Naive thymus-derived CD4-positive, alpha-beta T cell (primary cell): ENCODE measurements at regions of chr16 and their contacts with region 1.

Region 1: DNA sequence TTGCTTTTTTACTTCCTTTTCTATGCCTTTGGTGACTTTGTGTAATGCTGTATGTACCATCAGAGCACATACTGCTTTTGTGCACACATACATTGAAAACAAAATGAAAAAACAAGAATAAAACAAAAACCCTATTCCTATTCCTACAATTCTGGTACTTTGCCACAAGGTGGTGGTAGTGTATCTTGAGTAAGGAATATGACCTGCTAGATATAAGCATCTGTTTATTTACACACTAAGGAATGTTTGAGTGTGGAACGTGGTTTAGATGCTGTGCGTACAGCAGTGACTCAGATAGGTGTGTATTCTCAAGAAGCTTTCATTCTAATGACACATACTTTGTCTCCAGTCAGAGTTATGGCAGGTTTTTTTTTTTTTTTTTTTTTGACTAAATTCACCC is 606.2 kb downstream of the WWOX start:
- DNase-seq: peak in 5 of 9 donors; percentile 7 to 26 (median 12)
- ATAC-seq: peak; percentile 45
- H3K4me3 ChIP-seq: no peak overlapping the region
- H3K4me3 Mint-ChIP-seq: no peak overlapping the region
- H3K27ac ChIP-seq: no peak overlapping the region
- H3K27ac Mint-ChIP-seq: no peak overlapping the region
- H3K4me1 ChIP-seq: no peaks in the 10 kb centered on the region
- H3K4me1 Mint-ChIP-seq: peaks cover 0 to 8% (median 0%) of the 10 kb centered on the region in 7 donors
- H3K27me3 ChIP-seq: no peaks in the 10 kb centered on the region
- H3K27me3 Mint-ChIP-seq: no peaks in the 10 kb centered on the region

Region 2: DNA sequence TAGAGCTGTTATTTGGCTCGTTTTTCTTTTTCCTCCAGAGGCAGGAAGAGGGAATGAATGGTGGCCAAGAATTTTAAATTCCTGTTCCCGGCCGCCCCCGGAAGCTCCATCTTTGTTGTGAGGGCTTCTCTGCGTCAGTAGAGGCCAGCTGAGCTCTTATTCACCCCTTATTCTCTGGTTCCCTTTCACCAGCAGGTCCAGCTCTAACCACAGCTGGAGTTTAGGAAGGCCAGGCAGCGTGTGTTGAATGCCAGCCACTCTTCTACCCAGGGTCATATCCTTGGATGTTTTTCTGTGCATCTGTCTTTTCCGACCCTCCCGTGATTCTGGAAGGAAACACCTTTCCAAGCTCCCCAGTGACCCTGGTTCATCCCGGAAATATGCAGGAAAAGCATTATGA is 35.7 kb before region 1 on chr16:
- CTCF ChIA-PET with region 1: no interaction called
- POLR2A ChIA-PET with region 1: no interaction called
- intact Hi-C with region 1: no loop called
- DNase-seq: no peak
- ATAC-seq: no peak
- H3K4me3 ChIP-seq: no peak overlapping the region
- H3K4me3 Mint-ChIP-seq: no peak overlapping the region
- H3K27ac ChIP-seq: no peak overlapping the region
- H3K27ac Mint-ChIP-seq: no peak overlapping the region
- H3K4me1 ChIP-seq: no peaks in the 10 kb centered on the region
- H3K4me1 Mint-ChIP-seq: no peaks in the 10 kb centered on the region
- H3K27me3 ChIP-seq: no peaks in the 10 kb centered on the region
- H3K27me3 Mint-ChIP-seq: no peaks in the 10 kb centered on the region

Region 3: DNA sequence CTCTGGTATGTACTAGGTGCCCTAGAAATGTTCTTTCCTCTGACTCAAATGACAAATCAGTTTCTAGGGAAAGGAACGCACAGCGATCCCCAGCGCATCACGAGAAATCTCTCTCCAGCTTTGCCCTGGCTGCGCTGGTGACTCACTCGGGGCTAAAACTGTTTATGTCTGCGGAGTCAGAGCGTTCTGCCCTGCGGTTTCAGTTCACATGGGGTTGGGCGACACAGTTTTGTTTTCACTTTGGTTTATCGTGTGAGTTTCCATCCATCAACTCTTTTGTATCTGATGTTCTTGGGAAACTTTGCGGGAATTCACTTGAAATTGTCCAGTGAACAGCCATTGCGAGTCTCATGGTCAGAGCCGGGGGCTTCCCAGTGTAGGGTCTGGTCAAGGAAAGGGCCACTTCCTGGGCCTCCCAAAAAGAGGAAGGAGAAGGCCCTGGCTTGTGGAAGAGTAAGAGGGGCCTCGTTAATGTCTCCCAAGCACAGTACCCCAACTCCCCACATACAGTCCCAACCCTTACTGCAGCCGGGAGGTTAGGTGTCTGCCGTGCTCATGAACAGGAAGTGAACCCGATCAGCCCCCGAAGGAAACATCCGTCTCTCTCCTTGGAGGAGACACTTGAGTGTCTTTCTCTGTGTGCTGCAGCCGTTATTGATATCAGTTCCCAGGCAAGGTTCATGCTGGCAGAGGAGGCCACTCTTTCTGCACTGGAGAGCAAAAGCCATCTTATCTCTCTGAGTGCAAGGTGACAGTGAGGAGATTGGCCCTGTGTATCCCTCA is 37.0 kb after region 1 on chr16:
- CTCF ChIA-PET with region 1: no interaction called
- POLR2A ChIA-PET with region 1: no interaction called
- intact Hi-C with region 1: loop called in 1 of 2 experiments (anchors 1 kb)
- DNase-seq: peak; percentile 27 to 72 (median 46)
- ATAC-seq: peak; percentile 93
- H3K4me3 ChIP-seq: peak overlapping the region; percentile 62
- H3K4me3 Mint-ChIP-seq: peak overlapping the region; percentile 61 to 84 (median 77)
- H3K27ac ChIP-seq: peak overlapping the region; percentile 73
- H3K27ac Mint-ChIP-seq: peak overlapping the region; percentile 86 to 98 (median 93)
- H3K4me1 ChIP-seq: peaks cover 12 to 22% of the 10 kb centered on the region in 2 donors
- H3K4me1 Mint-ChIP-seq: peaks cover 5 to 23% (median 20%) of the 10 kb centered on the region in 7 donors
- H3K27me3 ChIP-seq: no peaks in the 10 kb centered on the region
- H3K27me3 Mint-ChIP-seq: no peaks in the 10 kb centered on the region

Region 4: DNA sequence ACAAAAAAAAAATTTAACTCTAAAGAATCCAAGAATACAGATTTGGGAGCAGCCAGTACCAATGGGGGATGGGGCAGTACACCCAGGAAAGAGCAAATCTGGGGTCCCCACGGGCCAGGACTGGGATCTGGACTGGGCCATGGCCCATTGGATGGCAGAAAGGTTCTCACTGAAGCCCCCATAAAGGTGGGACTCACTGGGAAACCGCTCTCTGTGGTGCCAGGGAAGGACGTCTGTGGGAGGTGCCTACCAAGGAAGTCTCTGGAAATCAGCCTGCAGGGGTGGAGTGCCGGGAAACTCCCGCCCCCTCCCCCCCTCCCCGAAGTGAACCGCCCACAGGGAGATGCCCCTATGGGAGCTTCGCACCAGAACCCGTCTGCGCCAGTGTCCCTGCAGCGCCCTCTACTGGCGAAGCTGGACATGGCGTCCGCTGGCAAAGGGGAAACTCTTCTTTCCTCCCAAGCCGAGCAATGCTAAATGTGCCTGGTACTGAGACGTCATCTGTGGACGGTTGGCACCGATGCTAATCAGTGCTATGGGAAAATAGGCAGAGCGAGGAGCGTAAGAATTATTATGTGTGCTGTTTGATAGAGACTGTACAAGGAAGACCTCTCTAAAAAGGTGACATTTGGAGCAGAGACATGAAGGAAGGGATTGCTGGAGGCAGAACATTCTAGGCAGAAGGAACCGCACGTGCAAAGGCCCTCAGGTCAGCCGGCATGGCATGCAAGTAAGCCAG is 64.8 kb after region 1 on chr16:
- CTCF ChIA-PET with region 1: interaction called, 10 read pairs
- POLR2A ChIA-PET with region 1: no interaction called
- intact Hi-C with region 1: loop called (anchors 1 kb)
- DNase-seq: peak; percentile 21 to 81 (median 52)
- ATAC-seq: peak; percentile 94
- H3K4me3 ChIP-seq: no peak overlapping the region
- H3K4me3 Mint-ChIP-seq: peak overlapping the region in 2 of 10 donors; percentile 4 to 28
- H3K27ac ChIP-seq: no peak overlapping the region
- H3K27ac Mint-ChIP-seq: peak overlapping the region in 5 of 9 donors; percentile 1 to 26 (median 3)
- H3K4me1 ChIP-seq: peaks cover 0 to 21% of the 10 kb centered on the region in 2 donors
- H3K4me1 Mint-ChIP-seq: peaks cover 6 to 23% (median 7%) of the 10 kb centered on the region in 7 donors
- H3K27me3 ChIP-seq: no peaks in the 10 kb centered on the region
- H3K27me3 Mint-ChIP-seq: peaks cover 0 to 5% (median 0%) of the 10 kb centered on the region in 5 donors

Region 5: DNA sequence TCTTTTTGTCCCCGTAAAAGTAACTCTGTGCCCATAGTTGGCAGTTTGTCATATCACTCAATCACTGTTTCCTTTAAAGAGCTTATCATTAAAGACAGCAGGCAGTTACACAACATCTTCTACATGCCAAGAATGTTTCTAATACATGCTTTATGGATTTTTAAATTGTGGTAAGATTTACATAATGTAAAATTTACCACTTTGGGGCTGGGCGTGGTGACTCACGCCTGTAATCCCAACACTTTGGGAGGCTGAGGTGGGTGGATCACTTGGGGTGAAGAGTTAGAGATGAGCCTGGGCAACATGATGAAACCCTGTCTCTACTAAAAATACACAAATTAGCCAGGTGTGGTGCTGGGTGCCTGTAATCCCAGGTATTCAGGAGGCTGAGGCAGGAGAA is 81.0 kb after region 1 on chr16:
- CTCF ChIA-PET with region 1: no interaction called
- POLR2A ChIA-PET with region 1: no interaction called
- intact Hi-C with region 1: no loop called
- DNase-seq: no peak
- ATAC-seq: no peak
- H3K4me3 ChIP-seq: no peak overlapping the region
- H3K4me3 Mint-ChIP-seq: no peak overlapping the region
- H3K27ac ChIP-seq: no peak overlapping the region
- H3K27ac Mint-ChIP-seq: no peak overlapping the region
- H3K4me1 ChIP-seq: no peaks in the 10 kb centered on the region
- H3K4me1 Mint-ChIP-seq: peaks cover 0 to 19% (median 0%) of the 10 kb centered on the region in 7 donors
- H3K27me3 ChIP-seq: no peaks in the 10 kb centered on the region
- H3K27me3 Mint-ChIP-seq: no peaks in the 10 kb centered on the region

Region 6: DNA sequence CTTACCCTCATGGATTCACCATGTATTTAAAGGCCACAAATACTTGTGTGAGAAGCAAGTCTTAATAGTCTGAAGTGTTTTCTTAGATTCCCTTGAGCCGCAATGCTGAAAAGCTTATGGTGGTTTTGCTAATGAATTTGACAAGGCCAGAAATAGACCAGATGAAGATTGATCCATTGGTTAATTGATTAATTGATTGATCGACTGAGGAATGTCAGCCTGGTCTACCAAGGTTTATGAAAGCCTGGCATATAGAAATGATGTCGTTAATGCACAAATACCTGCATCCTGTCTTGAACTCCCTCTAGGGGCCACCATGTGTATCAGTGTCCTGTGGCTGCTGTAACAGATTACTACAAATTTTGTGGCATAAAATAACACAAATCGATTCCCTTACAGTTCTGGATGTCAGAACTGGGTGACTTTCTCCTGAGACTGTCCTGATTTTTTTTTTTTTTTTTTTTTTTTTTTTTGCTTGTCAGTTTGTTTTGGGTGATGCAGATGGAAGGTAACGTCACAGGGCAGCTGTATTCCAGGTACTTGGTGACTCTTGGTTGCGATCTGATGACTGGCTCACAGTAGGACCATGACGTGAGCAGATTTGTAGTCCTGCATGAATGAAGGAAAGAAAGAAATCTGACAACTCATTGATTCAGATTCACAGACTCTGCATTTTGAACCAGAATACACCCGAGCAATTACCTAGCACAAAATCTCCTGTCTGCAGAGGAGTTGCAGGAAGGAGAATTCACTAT is 341.7 kb after region 1 on chr16:
- CTCF ChIA-PET with region 1: no interaction called
- POLR2A ChIA-PET with region 1: no interaction called
- intact Hi-C with region 1: loop called (anchors 2 to 5 kb)
- DNase-seq: no peak
- ATAC-seq: peak; percentile 49
- H3K4me3 ChIP-seq: no peak overlapping the region
- H3K4me3 Mint-ChIP-seq: no peak overlapping the region
- H3K27ac ChIP-seq: no peak overlapping the region
- H3K27ac Mint-ChIP-seq: no peak overlapping the region
- H3K4me1 ChIP-seq: peaks cover 12 to 16% of the 10 kb centered on the region in 2 donors
- H3K4me1 Mint-ChIP-seq: peaks cover 18 to 30% (median 26%) of the 10 kb centered on the region in 7 donors
- H3K27me3 ChIP-seq: no peaks in the 10 kb centered on the region
- H3K27me3 Mint-ChIP-seq: no peaks in the 10 kb centered on the region

Region 7: GRCh38 chr16:79261481-79261940 is 555.8 kb after region 1 on chr16:
- CTCF ChIA-PET with region 1: no interaction called
- POLR2A ChIA-PET with region 1: no interaction called
- intact Hi-C with region 1: loop called in 1 of 2 experiments (anchors 10 kb)
- DNase-seq: peak in 3 of 9 donors; percentile 13 to 34 (median 14)
- ATAC-seq: peak; percentile 65
- H3K4me3 ChIP-seq: no peak overlapping the region
- H3K4me3 Mint-ChIP-seq: no peak overlapping the region
- H3K27ac ChIP-seq: no peak overlapping the region
- H3K27ac Mint-ChIP-seq: peak overlapping the region in 1 of 9 donors; percentile 31
- H3K4me1 ChIP-seq: no peaks in the 10 kb centered on the region
- H3K4me1 Mint-ChIP-seq: peaks cover 0 to 28% (median 0%) of the 10 kb centered on the region in 7 donors
- H3K27me3 ChIP-seq: peaks cover 0 to 3% of the 10 kb centered on the region in 2 donors
- H3K27me3 Mint-ChIP-seq: peaks cover 5 to 37% (median 26%) of the 10 kb centered on the region in 5 donors

Region 8: DNA sequence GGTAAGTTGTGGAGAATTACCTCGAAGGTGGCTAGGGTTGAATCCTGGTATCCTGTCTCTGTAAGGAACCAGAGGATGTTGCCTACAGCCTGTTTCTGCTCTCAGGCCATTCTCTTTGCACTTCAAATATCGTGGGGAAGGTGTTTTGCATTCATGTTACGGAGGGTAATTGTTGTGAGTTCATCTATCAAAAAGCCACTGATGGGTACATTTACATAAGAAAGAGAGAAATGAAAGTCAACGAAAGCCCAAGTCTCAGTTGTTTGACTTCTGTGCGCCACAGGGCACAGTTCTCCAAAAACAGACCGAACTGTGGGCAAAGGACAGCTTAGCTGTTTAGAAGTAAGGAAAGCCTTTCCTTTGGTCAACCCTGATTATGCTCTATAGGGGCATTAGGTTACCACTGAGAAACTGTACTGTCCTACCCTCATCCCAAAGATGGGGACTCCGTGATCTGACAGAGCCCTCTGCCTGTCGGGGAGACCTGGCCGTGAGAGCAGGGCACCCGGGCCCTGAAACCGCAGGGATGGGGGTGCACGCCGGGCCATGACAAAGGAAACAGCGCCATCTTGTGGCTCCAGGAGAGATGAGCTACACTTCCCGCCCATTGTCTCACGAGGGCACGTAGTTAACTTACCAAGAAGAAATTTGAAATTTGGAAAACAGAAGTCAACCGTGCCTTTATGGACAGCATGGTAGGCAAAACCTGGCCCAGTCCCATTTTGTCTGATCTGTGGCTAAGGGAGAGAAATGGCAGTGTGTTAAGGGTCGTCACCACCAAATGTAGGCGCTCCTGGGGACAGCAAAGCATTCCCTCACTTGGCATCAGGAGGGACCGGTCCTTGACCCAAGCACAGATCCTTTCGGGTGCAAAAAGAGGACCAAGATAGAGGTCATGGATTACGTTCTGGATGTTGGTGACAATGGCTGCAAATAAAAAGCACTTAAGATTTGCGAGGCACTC is 1760.6 kb after region 1 on chr16:
- CTCF ChIA-PET with region 1: no interaction called
- POLR2A ChIA-PET with region 1: no interaction called
- intact Hi-C with region 1: loop called in 1 of 2 experiments (anchors 10 kb)
- DNase-seq: peak in 7 of 9 donors; percentile 25 to 59 (median 34)
- ATAC-seq: peak; percentile 77
- H3K4me3 ChIP-seq: no peak overlapping the region
- H3K4me3 Mint-ChIP-seq: no peak overlapping the region
- H3K27ac ChIP-seq: no peak overlapping the region
- H3K27ac Mint-ChIP-seq: no peak overlapping the region
- H3K4me1 ChIP-seq: no peaks in the 10 kb centered on the region
- H3K4me1 Mint-ChIP-seq: peaks cover 0 to 3% (median 0%) of the 10 kb centered on the region in 7 donors
- H3K27me3 ChIP-seq: no peaks in the 10 kb centered on the region
- H3K27me3 Mint-ChIP-seq: peaks cover 12 to 22% (median 16%) of the 10 kb centered on the region in 5 donors

Region 9: DNA sequence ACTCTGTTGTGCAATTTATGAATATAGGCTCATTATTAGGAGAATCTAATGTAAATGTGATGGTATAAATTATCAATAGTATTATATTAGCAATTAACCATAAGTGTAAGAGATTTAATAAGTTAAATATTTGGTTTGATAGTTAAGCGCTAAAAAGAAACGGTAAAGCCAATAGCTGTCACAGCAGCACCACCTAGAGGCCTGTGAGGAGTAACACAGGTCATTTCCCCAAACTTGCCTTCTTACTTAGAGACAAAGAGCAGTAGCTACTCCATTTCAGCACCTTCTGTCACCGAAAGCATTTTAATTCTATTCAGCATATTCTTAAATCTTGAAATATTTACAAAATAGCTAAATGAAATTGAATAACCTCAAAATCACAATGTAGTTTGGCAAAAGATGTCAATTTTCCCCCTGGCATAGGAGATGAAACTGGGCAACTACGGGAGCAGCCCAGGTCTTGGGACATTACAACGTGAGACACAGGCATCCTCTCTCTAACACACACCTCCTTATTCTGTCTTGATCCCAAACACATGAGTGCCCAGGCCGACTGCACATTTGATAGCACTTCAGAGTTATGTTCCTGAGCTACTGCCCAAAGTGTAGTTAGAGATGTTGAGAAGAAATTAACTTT is 1820.8 kb after region 1 on chr16:
- CTCF ChIA-PET with region 1: no interaction called
- POLR2A ChIA-PET with region 1: no interaction called
- intact Hi-C with region 1: loop called in 1 of 2 experiments (anchors 10 kb)
- DNase-seq: peak; percentile 18 to 62 (median 51)
- ATAC-seq: peak; percentile 89
- H3K4me3 ChIP-seq: no peak overlapping the region
- H3K4me3 Mint-ChIP-seq: no peak overlapping the region
- H3K27ac ChIP-seq: no peak overlapping the region
- H3K27ac Mint-ChIP-seq: peak overlapping the region in 1 of 9 donors; percentile 4
- H3K4me1 ChIP-seq: no peaks in the 10 kb centered on the region
- H3K4me1 Mint-ChIP-seq: peaks cover 0 to 20% (median 0%) of the 10 kb centered on the region in 7 donors
- H3K27me3 ChIP-seq: no peaks in the 10 kb centered on the region
- H3K27me3 Mint-ChIP-seq: peaks cover 0 to 26% (median 0%) of the 10 kb centered on the region in 5 donors